ENCODE measurements at regions of chr10 and their contacts with region 1.

Region 1: DNA sequence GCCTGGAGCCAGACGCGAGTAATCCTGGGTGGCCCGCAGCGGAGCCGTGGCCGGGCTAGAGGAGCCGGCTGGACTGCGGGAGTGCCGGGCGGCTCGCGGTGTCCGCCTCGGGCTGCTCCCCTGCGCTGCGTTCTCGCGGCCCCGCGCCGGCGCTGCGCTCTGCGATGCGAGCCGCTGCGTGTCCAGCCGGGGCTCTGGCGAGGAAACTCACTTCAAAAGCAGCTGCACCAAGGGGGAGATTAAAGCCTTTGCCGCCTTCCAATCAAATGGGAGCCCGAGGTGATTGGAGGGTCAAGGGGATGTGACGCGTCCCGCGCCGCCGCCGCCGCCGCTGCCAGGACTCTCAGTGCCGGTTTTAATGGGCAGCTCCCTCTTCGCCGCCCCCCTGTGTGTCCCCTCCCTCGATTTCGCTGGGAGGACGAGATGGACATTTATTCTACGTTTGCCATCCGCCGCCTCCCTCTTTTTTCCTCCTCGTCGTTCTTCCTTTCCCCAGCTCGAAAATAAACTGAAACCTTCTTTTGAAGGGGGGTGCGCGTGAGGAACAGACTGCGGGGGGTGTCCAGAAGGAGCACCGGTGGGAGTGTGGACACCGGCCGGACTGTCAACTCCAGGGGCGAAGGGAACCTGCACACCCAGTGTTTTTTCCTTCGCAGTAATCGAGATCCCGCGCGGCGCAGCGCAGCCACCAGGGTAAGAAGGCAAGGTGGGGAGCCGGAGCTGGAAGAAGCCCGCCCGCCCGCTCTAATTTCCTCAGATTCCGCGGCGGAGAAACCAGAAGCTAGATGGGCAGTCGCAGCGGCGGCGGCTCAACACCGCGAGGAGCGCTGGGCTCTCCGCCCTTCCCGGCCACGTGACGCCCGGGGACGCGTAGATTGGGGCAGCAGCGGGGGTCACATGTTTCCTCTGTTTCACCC is at the start of gene ZNF503:
- DNase-seq: peak; percentile 98
- ATAC-seq: peak; percentile 65
- H3K4me3 ChIP-seq: peak within 1 kb of the TSS; percentile 100
- H3K27ac ChIP-seq: peak within 1 kb of the TSS; percentile 97
- H3K4me1 ChIP-seq: peaks cover 25% of the 10 kb centered on the region
- H3K27me3 ChIP-seq: no peaks in the 10 kb centered on the region; a peak in 1 of 5 replicates
- CTCF ChIP-seq: no peak; the same call in 1 of the 2 replicates
- EP300 ChIP-seq: peak in 1 of 2 experiments; percentile 43; a peak in 1 of 4 replicates
- POLR2A ChIP-seq: peak in 1 of 2 experiments; percentile 98; a peak in 2 of 4 replicates
- RAD21 ChIP-seq: peak; percentile 71
- total RNA-seq, gene ZNF503: 5.8 and 8.3 TPM in 2 replicates

Region 2: GRCh38 chr10:75014516-75015230 is 387.2 kb before region 1 on chr10:
- CTCF ChIA-PET with region 1: no interaction called
- POLR2A ChIA-PET with region 1: no interaction called
- in situ Hi-C with region 1: no loop called
- intact Hi-C with region 1: no loop called
- DNase-seq: no peak
- ATAC-seq: no peak
- H3K4me3 ChIP-seq: no peak overlapping the region
- H3K27ac ChIP-seq: no peak overlapping the region
- H3K4me1 ChIP-seq: no peaks in the 10 kb centered on the region
- H3K27me3 ChIP-seq: no peaks in the 10 kb centered on the region
- CTCF ChIP-seq: no peak
- EP300 ChIP-seq: no peak
- POLR2A ChIP-seq: no peak
- RAD21 ChIP-seq: no peak

Region 3: GRCh38 chr10:75431180-75432111 is 29.6 kb after region 1 on chr10 and contains the start of gene LRMDA:
- CTCF ChIA-PET with region 1: no interaction called
- POLR2A ChIA-PET with region 1: interaction called, 219 read pairs
- in situ Hi-C with region 1: no loop called
- intact Hi-C with region 1: loop called (anchors 1 kb)
- DNase-seq: peak; percentile 83
- ATAC-seq: peak; percentile 73
- H3K4me3 ChIP-seq: peak within 1 kb of the TSS; percentile 77 to 95 (median 79)
- H3K27ac ChIP-seq: peak within 1 kb of the TSS; percentile 92
- H3K4me1 ChIP-seq: peaks cover 84% of the 10 kb centered on the region
- H3K27me3 ChIP-seq: no peaks in the 10 kb centered on the region
- CTCF ChIP-seq: peak; percentile 20; the same call in 1 of the 2 replicates
- EP300 ChIP-seq: peak; percentile 4 to 70; a peak in 2 of 4 replicates
- POLR2A ChIP-seq: peak in 1 of 2 experiments; percentile 14; a peak in 2 of 4 replicates
- RAD21 ChIP-seq: peak; percentile 66; the same call in 1 of the 2 replicates
- total RNA-seq, gene LRMDA: 19.3 and 22.0 TPM in 2 replicates

Region 4: DNA sequence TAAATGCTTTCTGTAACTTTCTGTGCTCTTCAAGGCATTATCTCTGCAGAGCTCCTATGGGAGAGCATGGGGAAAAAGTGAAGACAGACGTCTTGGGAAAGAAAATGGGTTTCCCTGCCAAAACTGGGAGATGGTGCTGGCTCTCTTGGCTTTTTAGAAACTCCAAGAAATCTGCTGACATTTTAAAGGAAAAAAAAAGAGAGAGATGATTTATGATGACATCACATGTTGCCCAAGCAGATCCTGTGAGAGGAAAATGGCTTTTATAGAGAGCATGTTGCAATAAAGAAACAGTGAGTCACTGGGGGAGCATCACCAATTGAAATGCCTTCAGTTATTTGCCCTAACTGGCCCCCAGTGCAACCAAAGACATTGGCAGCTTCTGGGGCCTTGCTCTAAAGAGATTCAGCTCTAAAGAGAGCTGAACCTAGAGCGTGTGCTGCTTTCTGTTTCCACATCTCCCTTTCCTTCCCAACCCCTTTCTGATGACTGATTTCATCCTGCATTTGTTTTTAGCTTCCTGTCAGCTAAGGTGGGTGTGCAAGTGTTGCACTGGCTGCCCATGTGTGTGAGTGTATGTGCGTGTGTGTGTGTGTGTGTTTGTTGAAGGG is 67.3 kb after region 1 on chr10:
- CTCF ChIA-PET with region 1: no interaction called
- POLR2A ChIA-PET with region 1: no interaction called
- in situ Hi-C with region 1: no loop called
- intact Hi-C with region 1: no loop called
- DNase-seq: peak; percentile 6
- ATAC-seq: no peak
- H3K4me3 ChIP-seq: no peak overlapping the region
- H3K27ac ChIP-seq: no peak overlapping the region
- H3K4me1 ChIP-seq: 0 out of 2 replicates have a peak, but pooled peaks cover 5% of the 10 kb centered on the region
- H3K27me3 ChIP-seq: no peaks in the 10 kb centered on the region
- CTCF ChIP-seq: no peak
- EP300 ChIP-seq: no peak
- POLR2A ChIP-seq: no peak
- RAD21 ChIP-seq: no peak

Region 5: DNA sequence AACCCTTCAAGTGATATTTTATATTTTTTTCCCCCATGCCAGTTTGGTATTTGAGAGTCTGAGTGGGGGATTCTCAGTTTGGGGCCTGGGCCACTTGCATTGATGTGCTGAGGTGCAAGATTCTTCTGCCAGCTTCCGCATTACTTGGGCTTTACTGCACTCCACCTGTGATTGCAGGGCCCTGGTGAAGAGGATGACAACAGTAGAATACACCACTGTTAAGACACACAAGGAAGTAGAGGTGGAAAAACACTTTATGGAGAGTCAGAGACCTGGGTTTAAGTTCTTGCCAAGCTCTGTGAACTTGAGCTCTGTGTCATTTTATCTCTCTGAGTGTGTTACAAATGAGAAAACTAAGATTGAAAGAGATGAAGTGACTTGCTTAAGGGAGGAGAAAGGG is 239.0 kb after region 1 on chr10:
- CTCF ChIA-PET with region 1: no interaction called
- POLR2A ChIA-PET with region 1: no interaction called
- in situ Hi-C with region 1: no loop called
- intact Hi-C with region 1: loop called (anchors 10 kb)
- DNase-seq: no peak
- ATAC-seq: no peak
- H3K4me3 ChIP-seq: no peak overlapping the region
- H3K27ac ChIP-seq: no peak overlapping the region
- H3K4me1 ChIP-seq: peaks cover 6% of the 10 kb centered on the region
- H3K27me3 ChIP-seq: no peaks in the 10 kb centered on the region
- CTCF ChIP-seq: no peak
- EP300 ChIP-seq: no peak
- POLR2A ChIP-seq: no peak
- RAD21 ChIP-seq: no peak

Region 6: GRCh38 chr10:75772153-75772887 is 370.5 kb after region 1 on chr10:
- CTCF ChIA-PET with region 1: no interaction called
- POLR2A ChIA-PET with region 1: interaction called, 33 read pairs
- in situ Hi-C with region 1: loop called (anchors 5 kb)
- intact Hi-C with region 1: no loop called
- DNase-seq: no peak
- ATAC-seq: no peak
- H3K4me3 ChIP-seq: no peak overlapping the region
- H3K27ac ChIP-seq: peak overlapping the region; percentile 13
- H3K4me1 ChIP-seq: peaks cover 69% of the 10 kb centered on the region
- H3K27me3 ChIP-seq: no peaks in the 10 kb centered on the region
- CTCF ChIP-seq: no peak
- EP300 ChIP-seq: no peak
- POLR2A ChIP-seq: no peak
- RAD21 ChIP-seq: no peak

Region 7: DNA sequence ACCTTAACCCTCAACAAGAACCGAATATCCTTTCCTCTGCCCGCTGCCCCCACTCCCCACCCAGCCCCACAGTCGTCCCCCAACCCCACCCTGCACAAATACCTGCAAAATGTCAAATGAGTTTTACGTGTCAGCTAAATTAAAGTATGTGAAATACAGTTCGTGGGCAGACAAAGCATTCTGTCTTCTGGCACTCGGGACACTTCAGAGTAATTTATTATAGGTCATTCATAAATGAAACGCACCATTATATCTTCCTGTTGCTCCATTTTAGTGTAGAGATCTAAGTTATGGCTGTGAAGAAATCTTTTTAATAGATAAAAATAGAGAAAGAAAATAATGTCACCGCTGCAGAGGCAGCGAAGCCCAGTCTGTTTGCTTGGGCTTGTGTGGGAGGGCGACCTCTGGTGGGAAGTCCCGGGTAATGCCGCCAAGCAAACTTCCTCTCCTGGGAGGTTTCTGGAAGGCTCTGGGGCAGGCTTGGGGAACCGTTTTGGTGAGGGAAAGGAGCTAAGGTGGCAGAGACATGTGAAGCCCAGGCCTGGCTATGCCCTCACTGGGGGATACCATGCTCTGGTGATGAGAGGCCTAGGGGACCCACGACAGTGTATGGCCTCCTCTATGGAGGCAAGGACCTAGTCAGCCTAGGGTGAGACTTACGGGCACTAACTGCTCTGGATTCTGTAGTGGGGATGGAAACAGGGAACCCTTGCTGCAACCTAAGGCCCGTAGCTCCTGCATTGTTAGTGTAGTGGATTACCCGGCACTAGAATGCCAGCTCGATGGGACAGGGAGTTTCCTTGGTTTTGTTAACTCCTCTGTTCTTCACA is 634.5 kb after region 1 on chr10:
- CTCF ChIA-PET with region 1: no interaction called
- POLR2A ChIA-PET with region 1: interaction called, 41 read pairs
- in situ Hi-C with region 1: loop called (anchors 10 kb)
- intact Hi-C with region 1: loop called (anchors 2 kb)
- DNase-seq: no peak
- ATAC-seq: 0 out of 3 replicates have a peak, but pooled peaks have one; percentile 15
- H3K4me3 ChIP-seq: no peak overlapping the region
- H3K27ac ChIP-seq: peak overlapping the region; percentile 97
- H3K4me1 ChIP-seq: peaks cover 57% of the 10 kb centered on the region
- H3K27me3 ChIP-seq: no peaks in the 10 kb centered on the region; a peak in 1 of 5 replicates
- CTCF ChIP-seq: peak; percentile 85
- EP300 ChIP-seq: no peak
- POLR2A ChIP-seq: no peak
- RAD21 ChIP-seq: peak; percentile 79

Region 8: DNA sequence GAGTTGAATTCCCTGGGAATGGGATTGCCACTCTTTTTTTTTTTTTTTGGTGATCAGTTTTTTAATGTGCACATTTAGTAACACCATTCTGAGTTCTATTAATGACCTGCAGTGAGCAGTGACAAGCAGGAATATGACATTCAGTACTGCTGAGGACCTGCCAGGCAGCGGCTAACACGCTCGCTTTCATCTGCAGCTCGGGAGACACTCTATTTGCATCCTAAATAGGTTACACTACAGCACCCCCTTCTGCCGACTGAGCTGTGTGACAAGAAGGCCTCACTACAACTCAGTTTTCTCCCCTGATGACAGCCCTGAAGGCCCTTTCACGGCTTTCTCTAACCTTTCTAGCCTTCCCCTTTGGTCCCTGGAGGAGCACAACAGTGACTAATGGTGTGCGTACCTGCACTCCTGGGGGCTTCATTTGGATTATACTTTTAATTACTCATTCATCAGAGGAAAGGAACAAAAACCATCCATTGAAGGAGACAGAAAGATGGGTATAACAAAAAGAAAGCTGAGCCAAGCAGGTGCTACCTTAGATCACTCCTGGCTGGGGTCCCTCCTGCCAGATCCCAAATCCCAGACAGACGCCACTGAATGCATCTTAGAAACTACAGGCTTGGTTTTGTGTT is 902.0 kb after region 1 on chr10:
- CTCF ChIA-PET with region 1: interaction called, 5 read pairs
- POLR2A ChIA-PET with region 1: interaction called, 7 read pairs
- in situ Hi-C with region 1: no loop called
- intact Hi-C with region 1: loop called (anchors 5 kb)
- DNase-seq: peak; percentile 81
- ATAC-seq: peak; percentile 99
- H3K4me3 ChIP-seq: no peak overlapping the region
- H3K27ac ChIP-seq: no peak overlapping the region
- H3K4me1 ChIP-seq: peaks cover 47% of the 10 kb centered on the region
- H3K27me3 ChIP-seq: no peaks in the 10 kb centered on the region
- CTCF ChIP-seq: peak; percentile 89
- EP300 ChIP-seq: no peak
- POLR2A ChIP-seq: no peak
- RAD21 ChIP-seq: peak; percentile 80